ENCODE measurements at regions of chr6 and their contacts with region 1.

Region 1: GRCh38 chr6:36765594-36766398 is 68.2 kb downstream of the RAB44 start:
- DNase-seq: no peak
- H3K4me3 ChIP-seq: no peak overlapping the region
- H3K27ac ChIP-seq: peak overlapping the region; percentile 27
- H3K4me1 ChIP-seq: peaks cover 24% of the 10 kb centered on the region
- H3K27me3 ChIP-seq: no peaks in the 10 kb centered on the region
- CTCF ChIP-seq: peak; percentile 69 to 94 (median 86)
- POLR2A ChIP-seq: no peak

Region 2: GRCh38 chr6:36851149-36851614 is 85.4 kb after region 1 on chr6:
- intact Hi-C with region 1: loop called (anchors 1 kb)
- DNase-seq: no peak
- H3K4me3 ChIP-seq: no peak overlapping the region
- H3K27ac ChIP-seq: peak overlapping the region; percentile 60
- H3K4me1 ChIP-seq: peaks cover 45% of the 10 kb centered on the region
- H3K27me3 ChIP-seq: no peaks in the 10 kb centered on the region
- CTCF ChIP-seq: peak; percentile 56 to 71 (median 66)
- POLR2A ChIP-seq: no peak

Region 3: GRCh38 chr6:36985808-36986703 is 220.3 kb after region 1 on chr6 and contains the start of gene MTCH1:
- intact Hi-C with region 1: loop called (anchors 10 kb)
- DNase-seq: no peak
- H3K4me3 ChIP-seq: peak within 1 kb of the TSS; percentile 87 to 98
- H3K27ac ChIP-seq: peak within 1 kb of the TSS; percentile 96
- H3K4me1 ChIP-seq: peaks cover 60% of the 10 kb centered on the region
- H3K27me3 ChIP-seq: no peaks in the 10 kb centered on the region
- CTCF ChIP-seq: no peak
- POLR2A ChIP-seq: peak; percentile 64 to 97
- total RNA-seq, gene MTCH1: 233 TPM

Measured in vagina (tissue), 2 donors.